ENCODE measurements at regions of chrX and their contacts with region 1.

Region 1: GRCh38 chrX:53616946-53617345 is 69.6 kb downstream of the HUWE1 start:
- DNase-seq: no peak
- ATAC-seq: no peak

Region 2: DNA sequence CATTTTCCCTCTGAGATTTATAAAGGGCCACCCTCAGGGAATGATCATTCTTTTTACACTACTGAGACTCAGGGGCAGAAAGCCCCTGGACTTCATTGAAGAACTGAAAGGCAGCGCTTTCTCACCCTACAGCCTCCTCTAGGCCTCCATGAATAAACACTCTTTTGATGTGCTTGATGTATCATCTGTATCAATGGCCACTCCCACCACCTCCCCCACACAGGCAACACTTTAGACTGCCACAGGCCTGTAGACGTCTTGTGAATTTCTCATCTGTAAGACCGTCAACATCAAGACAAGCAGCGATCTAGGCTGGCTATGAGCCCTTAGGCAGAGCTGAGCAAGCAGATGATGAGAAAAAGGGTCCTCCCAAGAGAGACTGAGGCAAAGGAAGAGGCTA is 53.6 kb before region 1 on chrX:
- intact Hi-C with region 1: loop called (anchors 10 kb)
- DNase-seq: no peak
- ATAC-seq: no peak